Astrocyte of the cerebellum (primary cell): ENCODE measurements at regions of chr4 and their contacts with region 1.

Region 1: GRCh38 chr4:140865253-140866217 is 109.3 kb upstream of the TBC1D9 start:
- DNase-seq: no peak
- H3K4me3 ChIP-seq: no peak overlapping the region
- CTCF ChIP-seq: no peak

Region 2: GRCh38 chr4:141133146-141133998 is 267.8 kb after region 1 on chr4 and contains the start of gene RNF150:
- in situ Hi-C with region 1: loop called (anchors 5 kb)
- DNase-seq: peak; percentile 87
- H3K4me3 ChIP-seq: peak within 1 kb of the TSS; percentile 78
- CTCF ChIP-seq: peak; percentile 85